Activated naive CD4-positive, alpha-beta T cell treated with anti-CD3 and anti-CD28 coated beads for 36 hours (primary cell): ENCODE measurements at regions of chr19 and their contacts with region 1.

Region 1: GRCh38 chr19:588093-588740 is 1.5 kb upstream of the HCN2 start:
- DNase-seq: peak; percentile 82
- H3K4me3 Mint-ChIP-seq: no peak overlapping the region
- H3K27ac Mint-ChIP-seq: no peak overlapping the region
- H3K4me1 Mint-ChIP-seq: peaks cover 11% of the 10 kb centered on the region
- H3K27me3 Mint-ChIP-seq: peaks cover 18% of the 10 kb centered on the region

Region 2: DNA sequence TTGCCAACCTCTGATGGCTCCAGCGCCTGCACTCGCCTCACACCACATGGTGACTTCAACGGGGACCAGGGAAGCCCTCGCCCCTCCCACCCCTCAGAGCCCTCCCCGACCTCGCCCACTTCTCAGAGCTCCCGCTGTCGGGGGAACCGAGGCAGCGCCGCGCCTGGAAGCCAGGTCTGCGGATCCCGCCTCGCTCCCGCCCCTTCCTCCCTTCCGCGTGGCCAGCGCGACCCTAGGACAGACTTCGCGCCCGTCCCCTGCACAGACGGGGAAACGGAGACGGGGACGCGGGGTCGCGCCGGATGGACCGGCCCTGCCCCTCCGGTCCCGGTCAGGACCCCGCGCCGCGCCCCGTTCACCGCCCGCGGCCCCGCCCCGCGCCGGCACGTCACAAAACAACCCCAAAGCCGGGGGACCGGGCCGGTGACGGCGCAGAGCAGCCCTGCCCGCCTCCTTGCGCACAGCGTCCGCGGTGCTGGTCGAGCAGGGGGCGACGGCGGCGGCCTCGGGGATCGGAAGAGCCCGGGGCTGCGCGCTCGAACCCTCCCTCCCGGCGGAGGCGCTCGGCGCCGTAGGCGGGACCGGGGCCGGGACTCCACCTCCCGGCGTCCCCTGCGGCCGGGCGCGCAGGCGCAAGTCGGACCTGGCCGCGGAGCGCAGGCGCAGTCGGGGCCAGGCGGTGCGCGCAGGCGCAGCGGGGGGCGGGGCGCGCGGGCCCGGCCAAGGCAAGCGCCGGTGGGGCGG is 57.0 kb before region 1 on chr19:
- CTCF ChIA-PET with region 1: no interaction called
- intact Hi-C with region 1: no loop called
- DNase-seq: peak; percentile 82
- H3K4me3 Mint-ChIP-seq: peak overlapping the region; percentile 77
- H3K27ac Mint-ChIP-seq: peak overlapping the region; percentile 77
- H3K4me1 Mint-ChIP-seq: peaks cover 26% of the 10 kb centered on the region
- H3K27me3 Mint-ChIP-seq: peaks cover 3% of the 10 kb centered on the region

Region 3: DNA sequence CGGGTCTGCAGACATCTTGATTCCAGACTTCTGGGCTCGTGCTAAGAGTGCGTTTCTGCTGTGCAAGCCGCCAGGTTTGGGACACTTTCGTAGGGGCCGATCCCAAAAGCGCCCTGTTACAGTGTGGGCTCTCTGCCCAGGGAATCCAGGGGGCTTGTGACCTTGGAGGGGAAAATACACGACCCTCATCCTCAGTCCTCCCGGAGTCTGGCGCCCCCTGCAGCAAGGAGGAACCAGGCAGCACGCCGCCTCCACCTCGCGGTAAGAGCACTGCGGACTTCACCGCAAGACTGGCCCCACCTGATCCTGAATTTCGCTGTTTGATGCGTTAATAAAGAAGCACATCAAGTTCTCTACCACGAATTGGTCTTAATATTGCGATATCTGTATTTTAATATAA is 39.9 kb after region 1 on chr19:
- CTCF ChIA-PET with region 1: no interaction called
- intact Hi-C with region 1: loop called (anchors 2 kb)
- DNase-seq: peak; percentile 33
- H3K4me3 Mint-ChIP-seq: no peak overlapping the region
- H3K27ac Mint-ChIP-seq: no peak overlapping the region
- H3K4me1 Mint-ChIP-seq: peaks cover 33% of the 10 kb centered on the region
- H3K27me3 Mint-ChIP-seq: no peaks in the 10 kb centered on the region

Region 4: GRCh38 chr19:734716-735115 is 146.5 kb after region 1 on chr19:
- CTCF ChIA-PET with region 1: interaction called, 3 read pairs
- intact Hi-C with region 1: loop called (anchors 2 kb)
- DNase-seq: no peak
- H3K4me3 Mint-ChIP-seq: no peak overlapping the region
- H3K27ac Mint-ChIP-seq: no peak overlapping the region
- H3K4me1 Mint-ChIP-seq: peaks cover 6% of the 10 kb centered on the region
- H3K27me3 Mint-ChIP-seq: peaks cover 3% of the 10 kb centered on the region